ENCODE measurements at regions of chr6 and their contacts with region 1.

Region 1: DNA sequence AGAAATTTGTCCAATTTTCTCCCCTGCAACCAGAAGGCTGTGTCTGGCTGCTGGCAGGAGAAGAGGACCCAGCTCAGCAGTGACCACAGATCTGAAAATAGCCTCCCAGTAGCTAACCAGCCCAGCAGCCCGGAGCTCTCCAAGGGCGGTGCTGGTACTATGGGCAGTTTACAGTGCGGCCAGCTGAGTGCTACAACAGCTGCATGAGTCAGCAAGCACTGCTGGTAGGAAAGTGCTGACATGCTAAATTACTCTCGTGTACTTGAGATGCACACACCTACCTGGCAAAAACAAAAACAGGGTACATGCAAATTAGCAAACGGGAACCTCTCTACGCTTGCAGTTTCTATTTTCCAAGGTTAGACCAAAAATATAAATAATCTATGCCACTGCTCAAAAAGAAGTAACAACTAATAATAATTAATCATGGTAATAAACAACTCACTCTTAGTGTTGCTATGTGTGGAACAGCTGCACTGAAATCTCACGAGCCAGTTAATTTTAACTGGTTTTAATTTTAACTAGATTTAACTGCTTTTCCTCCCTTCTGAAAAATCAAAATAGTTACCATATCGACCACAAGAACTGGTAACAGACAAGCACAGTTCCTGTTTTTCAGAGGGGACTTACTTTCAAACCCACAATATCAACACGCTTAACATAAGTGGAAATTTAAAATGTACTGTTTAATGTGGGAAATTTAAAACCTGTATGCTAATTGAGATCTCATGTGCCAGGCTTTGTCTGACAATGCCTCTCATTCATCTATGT is 10.8 kb downstream of the BACH2 start:
- DNase-seq: peak; percentile 75
- ATAC-seq: peak; percentile 40
- H3K4me3 Mint-ChIP-seq: peak overlapping the region; percentile 62
- H3K27ac Mint-ChIP-seq: peak overlapping the region; percentile 95
- H3K4me1 Mint-ChIP-seq: peaks cover 93% of the 10 kb centered on the region
- H3K27me3 Mint-ChIP-seq: no peaks in the 10 kb centered on the region

Region 2: GRCh38 chr6:89940225-89941027 is 345.4 kb before region 1 on chr6:
- CTCF ChIA-PET with region 1: interaction called, 12 read pairs
- POLR2A ChIA-PET with region 1: no interaction called
- intact Hi-C with region 1: loop called (anchors 2 to 5 kb)
- DNase-seq: peak; percentile 80
- ATAC-seq: peak; percentile 80
- H3K4me3 Mint-ChIP-seq: no peak overlapping the region
- H3K27ac Mint-ChIP-seq: peak overlapping the region; percentile 47
- H3K4me1 Mint-ChIP-seq: peaks cover 60% of the 10 kb centered on the region
- H3K27me3 Mint-ChIP-seq: no peaks in the 10 kb centered on the region

Region 3: DNA sequence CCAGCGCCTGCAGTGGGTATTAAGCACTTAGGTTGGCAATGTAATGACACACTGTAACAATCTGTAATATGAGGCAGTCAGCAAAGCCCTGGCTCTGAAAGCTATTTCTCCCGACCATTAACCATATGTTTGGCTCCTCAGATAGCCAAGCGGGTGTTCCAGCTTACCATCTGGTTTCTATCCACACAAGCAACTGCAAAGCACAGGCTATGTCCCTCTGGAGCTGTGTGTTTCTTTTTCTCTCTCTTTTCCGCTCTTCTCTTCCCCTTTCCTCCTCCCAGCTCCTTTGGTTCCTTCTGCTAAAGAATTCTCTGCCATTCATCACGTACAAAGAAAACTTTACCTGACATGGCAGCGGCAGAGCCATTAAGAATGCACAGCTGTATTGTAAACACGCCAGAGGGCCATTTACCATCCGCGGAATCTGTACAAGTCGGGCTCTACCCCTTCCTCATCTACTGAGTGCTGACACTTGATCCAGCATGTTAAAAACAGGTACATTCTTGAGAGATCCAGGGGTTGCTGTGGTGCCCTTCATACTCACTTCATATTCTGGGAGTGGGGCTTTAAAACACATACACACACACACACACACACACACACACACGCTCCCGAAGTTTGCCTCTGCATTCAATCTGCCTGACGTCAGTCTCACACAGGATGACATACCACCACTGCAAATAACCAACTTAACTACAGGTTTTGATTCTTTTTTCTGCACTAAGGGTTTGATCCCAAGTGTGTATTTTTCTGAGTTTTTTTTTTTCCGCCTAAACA is 66.4 kb before region 1 on chr6:
- CTCF ChIA-PET with region 1: interaction called, 7 read pairs
- POLR2A ChIA-PET with region 1: interaction called, 5 read pairs
- intact Hi-C with region 1: loop called (anchors 2 kb)
- DNase-seq: peak; percentile 50
- ATAC-seq: no peak
- H3K4me3 Mint-ChIP-seq: no peak overlapping the region
- H3K27ac Mint-ChIP-seq: no peak overlapping the region
- H3K4me1 Mint-ChIP-seq: peaks cover 20% of the 10 kb centered on the region
- H3K27me3 Mint-ChIP-seq: no peaks in the 10 kb centered on the region

Region 4: GRCh38 chr6:90274451-90275030 is 11.3 kb before region 1 on chr6:
- CTCF ChIA-PET with region 1: interaction called, 38 read pairs
- POLR2A ChIA-PET with region 1: interaction called, 12 read pairs
- intact Hi-C with region 1: loop called (anchors 1 kb)
- DNase-seq: peak; percentile 96
- ATAC-seq: peak; percentile 89
- H3K4me3 Mint-ChIP-seq: peak overlapping the region; percentile 54
- H3K27ac Mint-ChIP-seq: peak overlapping the region; percentile 90
- H3K4me1 Mint-ChIP-seq: peaks cover 95% of the 10 kb centered on the region
- H3K27me3 Mint-ChIP-seq: no peaks in the 10 kb centered on the region

Region 5: GRCh38 chr6:90413867-90414266 is 128.1 kb after region 1 on chr6:
- CTCF ChIA-PET with region 1: interaction called, 14 read pairs
- POLR2A ChIA-PET with region 1: no interaction called
- intact Hi-C with region 1: loop called in 1 of 2 experiments (anchors 1 kb)
- DNase-seq: peak; percentile 91
- ATAC-seq: peak; percentile 51
- H3K4me3 Mint-ChIP-seq: peak overlapping the region; percentile 67
- H3K27ac Mint-ChIP-seq: peak overlapping the region; percentile 93
- H3K4me1 Mint-ChIP-seq: peaks cover 72% of the 10 kb centered on the region
- H3K27me3 Mint-ChIP-seq: no peaks in the 10 kb centered on the region

Region 6: DNA sequence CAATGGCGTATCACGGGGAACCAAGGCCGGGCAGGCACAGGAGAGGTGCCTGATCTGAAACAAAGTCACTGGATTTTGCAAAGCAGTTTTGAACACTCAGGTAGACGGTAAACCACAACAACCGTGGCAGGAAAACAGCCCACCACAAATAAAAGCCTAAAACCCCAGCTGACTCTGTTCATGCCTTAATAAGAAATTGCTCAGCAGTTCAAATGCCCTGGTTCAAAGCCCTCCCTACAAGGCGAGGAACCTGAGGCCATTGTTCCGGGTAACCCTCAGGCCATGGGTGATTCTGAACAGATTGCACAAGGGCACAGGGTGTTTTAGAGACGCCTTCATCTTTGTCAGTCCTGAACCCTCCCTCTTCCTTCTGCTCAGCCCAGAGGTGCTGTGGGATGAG is 186.9 kb after region 1 on chr6:
- CTCF ChIA-PET with region 1: interaction called, 135 read pairs
- POLR2A ChIA-PET with region 1: interaction called, 4 read pairs
- intact Hi-C with region 1: loop called (anchors 1 kb)
- DNase-seq: peak; percentile 51
- ATAC-seq: peak; percentile 9
- H3K4me3 Mint-ChIP-seq: peak overlapping the region; percentile 58
- H3K27ac Mint-ChIP-seq: peak overlapping the region; percentile 77
- H3K4me1 Mint-ChIP-seq: peaks cover 99% of the 10 kb centered on the region
- H3K27me3 Mint-ChIP-seq: peaks cover 2% of the 10 kb centered on the region

Region 7: DNA sequence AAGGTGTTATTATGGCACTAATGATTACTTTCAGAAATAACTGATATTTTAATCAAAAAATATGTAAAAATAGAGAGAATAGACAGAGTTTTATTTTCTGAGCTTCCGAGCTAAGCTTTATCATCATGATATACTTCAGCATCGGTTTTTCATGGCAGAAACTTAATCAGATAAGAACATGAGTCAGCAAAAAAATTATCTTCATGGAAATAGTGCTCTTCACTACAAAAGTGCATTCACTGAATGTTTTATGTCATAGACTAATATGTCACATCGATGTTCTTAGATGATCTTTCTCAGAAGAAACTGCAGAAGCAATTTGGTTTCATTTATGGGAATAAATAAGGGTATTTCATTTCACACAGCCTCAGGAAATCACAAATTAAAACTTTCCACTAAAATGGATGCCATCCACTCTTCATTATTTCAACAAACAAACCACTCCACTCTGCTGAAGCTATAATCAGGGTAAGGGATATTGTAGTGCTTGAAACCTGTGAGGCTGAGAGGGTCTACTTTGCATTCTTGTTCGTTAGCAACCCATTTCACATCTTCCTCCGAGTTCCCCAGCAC is 311.3 kb after region 1 on chr6:
- CTCF ChIA-PET with region 1: no interaction called
- POLR2A ChIA-PET with region 1: no interaction called
- intact Hi-C with region 1: no loop called
- DNase-seq: no peak
- ATAC-seq: no peak
- H3K4me3 Mint-ChIP-seq: no peak overlapping the region
- H3K27ac Mint-ChIP-seq: no peak overlapping the region
- H3K4me1 Mint-ChIP-seq: no peaks in the 10 kb centered on the region
- H3K27me3 Mint-ChIP-seq: peaks cover 29% of the 10 kb centered on the region

Region 8: DNA sequence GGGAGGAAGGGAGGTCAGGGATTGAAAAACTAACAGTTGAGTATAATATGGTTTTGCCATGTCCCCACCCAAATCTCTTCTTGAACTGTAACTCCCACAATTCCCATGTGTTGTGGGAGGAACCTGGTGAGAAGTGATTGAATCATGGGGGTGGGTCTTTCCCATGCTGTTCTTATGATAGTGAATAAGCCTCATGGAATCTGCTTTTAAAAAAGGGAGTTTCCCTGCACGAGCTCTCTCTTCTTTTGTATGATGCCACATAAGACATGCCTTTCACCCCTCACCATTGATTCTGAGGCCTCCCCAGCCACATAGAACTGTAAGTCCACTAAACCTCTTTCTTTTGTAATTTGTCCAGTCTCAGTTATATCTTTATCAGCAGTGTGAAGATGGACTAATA is 1134.4 kb after region 1 on chr6:
- CTCF ChIA-PET with region 1: no interaction called
- POLR2A ChIA-PET with region 1: no interaction called
- intact Hi-C with region 1: no loop called
- DNase-seq: no peak
- ATAC-seq: no peak
- H3K4me3 Mint-ChIP-seq: no peak overlapping the region
- H3K27ac Mint-ChIP-seq: no peak overlapping the region
- H3K4me1 Mint-ChIP-seq: no peaks in the 10 kb centered on the region
- H3K27me3 Mint-ChIP-seq: no peaks in the 10 kb centered on the region